ENCODE measurements at regions of chr7 and their contacts with region 1.

Region 1: DNA sequence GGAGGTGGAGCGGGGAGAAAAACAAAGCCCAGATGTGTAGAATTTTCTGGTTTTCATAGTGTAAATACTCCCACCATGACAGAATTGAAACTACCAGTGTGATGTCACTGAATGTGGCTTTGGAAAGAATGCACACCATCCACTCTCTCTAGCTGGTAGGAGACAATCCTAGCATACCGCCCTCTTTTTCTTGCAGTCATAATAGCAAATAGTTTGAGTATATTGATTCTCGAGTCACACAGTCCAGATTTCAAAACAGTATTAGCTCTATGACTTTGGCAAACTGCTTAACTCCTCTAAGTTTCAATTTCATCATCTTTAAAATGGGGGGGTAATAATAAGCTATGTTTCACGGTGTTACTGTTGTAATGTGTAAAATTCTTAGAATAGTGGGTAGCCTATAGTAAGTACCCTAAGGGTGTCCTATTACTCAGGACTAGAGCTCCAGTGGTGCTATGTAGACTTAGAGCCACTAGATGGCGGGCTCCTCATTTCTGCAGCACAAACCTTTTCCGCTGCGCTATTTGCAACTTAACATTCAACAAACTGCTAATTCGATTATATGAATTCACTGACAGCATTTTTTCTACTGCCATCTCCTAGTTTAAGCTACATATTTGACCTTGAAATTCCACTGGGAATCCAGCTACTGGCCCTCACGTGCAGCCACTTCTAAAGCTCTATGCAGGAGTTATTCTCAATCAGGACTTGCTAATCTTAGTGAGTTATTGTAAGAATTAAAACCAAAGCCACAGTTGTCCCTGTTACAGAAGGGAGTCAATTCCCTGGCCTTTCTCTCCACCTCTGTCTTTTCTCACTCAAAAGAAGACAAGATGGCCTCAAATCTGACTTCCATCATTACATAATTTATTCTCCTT is 18.7 kb downstream of the TAS2R40 start:
- DNase-seq: peak in 1 of 2 donors; percentile 66
- H3K4me3 ChIP-seq: peak overlapping the region in 1 of 3 donors; percentile 32
- H3K27ac ChIP-seq: peak overlapping the region in 1 of 2 donors; percentile 62
- H3K4me1 ChIP-seq: peaks cover 3 to 4% of the 10 kb centered on the region in 2 donors
- H3K27me3 ChIP-seq: no peaks in the 10 kb centered on the region
- CTCF ChIP-seq: peak; percentile 62 to 90 (median 82)
- POLR2A ChIP-seq: no peak

Region 2: GRCh38 chr7:143250822-143251221 is 10.3 kb after region 1 on chr7:
- intact Hi-C with region 1: loop called (anchors 1 kb)
- DNase-seq: no peak
- H3K4me3 ChIP-seq: no peak overlapping the region
- H3K27ac ChIP-seq: no peak overlapping the region
- H3K4me1 ChIP-seq: no peaks in the 10 kb centered on the region
- H3K27me3 ChIP-seq: no peaks in the 10 kb centered on the region
- CTCF ChIP-seq: no peak
- POLR2A ChIP-seq: no peak

Region 3: GRCh38 chr7:143305423-143306070 is 65.0 kb after region 1 on chr7:
- intact Hi-C with region 1: loop called (anchors 5 kb)
- DNase-seq: peak; percentile 63 to 87
- H3K4me3 ChIP-seq: no peak overlapping the region
- H3K27ac ChIP-seq: no peak overlapping the region
- H3K4me1 ChIP-seq: no peaks in the 10 kb centered on the region
- H3K27me3 ChIP-seq: no peaks in the 10 kb centered on the region
- CTCF ChIP-seq: peak in 2 of 3 donors; percentile 76 to 84
- POLR2A ChIP-seq: no peak

Region 4: DNA sequence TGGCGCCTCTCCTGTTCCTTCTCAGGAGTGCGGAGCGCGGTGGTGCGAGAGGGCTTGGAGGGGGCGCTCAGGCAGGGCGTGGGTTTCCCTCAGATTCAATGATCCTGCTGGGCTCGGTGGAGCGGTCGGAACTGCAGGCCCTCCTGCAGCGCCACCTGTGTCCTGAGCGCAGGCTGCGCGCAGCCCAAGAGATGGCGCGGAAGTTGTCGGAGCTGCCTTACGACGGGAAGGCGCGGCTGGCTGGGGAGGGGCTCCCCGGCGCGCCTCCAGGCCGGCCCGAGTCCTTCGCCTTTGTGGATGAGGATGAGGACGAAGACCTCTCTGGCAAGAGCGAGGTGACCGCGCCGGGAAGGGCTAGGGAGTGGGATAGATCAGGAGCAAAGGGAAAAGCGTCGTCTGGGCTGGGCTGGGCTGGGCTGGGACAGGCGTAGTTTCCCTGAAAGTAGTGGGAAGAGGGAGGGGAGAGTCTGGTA is 104.9 kb after region 1 on chr7:
- intact Hi-C with region 1: no loop called
- DNase-seq: no peak
- H3K4me3 ChIP-seq: peak overlapping the region in 2 of 3 donors; percentile 28 to 64
- H3K27ac ChIP-seq: no peak overlapping the region
- H3K4me1 ChIP-seq: no peaks in the 10 kb centered on the region
- H3K27me3 ChIP-seq: no peaks in the 10 kb centered on the region
- CTCF ChIP-seq: peak; percentile 22 to 55 (median 27)
- POLR2A ChIP-seq: no peak

Region 5: GRCh38 chr7:143408686-143409561 is 168.4 kb after region 1 on chr7 and contains the start of gene EPHA1:
- intact Hi-C with region 1: loop called (anchors 10 kb)
- DNase-seq: peak in 1 of 2 donors; percentile 75
- H3K4me3 ChIP-seq: peak within 1 kb of the TSS in 2 of 3 donors; percentile 72 to 73
- H3K27ac ChIP-seq: peak within 1 kb of the TSS; percentile 12 to 60
- H3K4me1 ChIP-seq: peaks cover 0 to 10% of the 10 kb centered on the region in 2 donors
- H3K27me3 ChIP-seq: no peaks in the 10 kb centered on the region
- CTCF ChIP-seq: peak; percentile 36 to 63 (median 45)
- POLR2A ChIP-seq: no peak
- total RNA-seq, gene EPHA1: 11.8 to 15.4 TPM in 2 of 3 donors, not detected in the other

Measured in breast epithelium (tissue), 4 donors.